GM18951 (cell line): ENCODE measurements at regions of chr11 and their contacts with region 1.

Region 1: GRCh38 chr11:65506770-65507505 is 8.1 kb downstream of the MALAT1 start:
- POLR2A ChIP-seq: peak; percentile 69

Region 2: DNA sequence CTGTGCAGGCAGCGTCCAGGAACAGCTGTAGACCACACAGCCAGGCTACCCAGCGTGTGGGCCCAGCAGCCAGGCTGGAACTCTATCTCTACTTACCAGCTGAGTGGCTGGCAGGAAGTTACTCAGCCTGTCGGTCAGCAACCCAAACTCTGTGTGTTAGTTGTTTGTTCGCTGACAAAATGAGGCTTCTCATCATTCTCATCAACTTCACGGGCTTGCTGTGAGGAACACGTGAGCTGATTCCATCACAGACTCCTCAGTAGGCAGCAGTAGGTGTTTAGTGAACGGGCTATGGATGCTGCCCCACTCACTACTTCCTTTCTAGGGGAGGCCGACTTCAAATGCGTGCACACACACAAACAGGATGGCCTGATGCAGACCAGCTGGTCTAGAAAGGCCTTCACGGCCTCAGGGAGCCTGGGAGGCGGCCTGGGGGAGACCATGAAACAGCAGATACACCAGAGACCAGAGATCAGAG is 337.7 kb before region 1 on chr11:
- in situ Hi-C with region 1: no loop called
- POLR2A ChIP-seq: no peak

Region 3: DNA sequence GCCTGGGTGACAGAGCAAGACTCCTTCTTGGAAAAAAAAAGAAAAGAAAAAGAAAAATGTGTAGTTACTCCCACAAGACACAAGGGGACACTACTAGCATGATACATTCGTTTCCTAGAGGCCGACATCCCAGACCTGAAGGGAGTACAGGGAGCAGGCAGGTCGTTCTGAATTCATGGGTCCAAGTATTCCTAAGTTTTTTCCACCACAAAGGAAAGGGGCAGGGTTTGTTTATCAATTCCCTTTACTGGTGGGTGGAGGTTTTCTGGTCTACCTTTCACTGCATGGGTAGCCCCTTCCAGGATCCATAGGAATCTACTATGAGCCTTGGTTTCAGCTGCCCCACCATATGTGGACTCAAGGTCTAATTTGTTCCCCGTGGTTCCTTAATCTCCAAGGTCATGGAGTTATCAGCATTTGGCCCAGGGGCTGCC is 140.6 kb before region 1 on chr11:
- in situ Hi-C with region 1: loop called (anchors 5 kb)
- POLR2A ChIP-seq: no peak